ENCODE measurements at regions of chr19 and their contacts with region 1.

Region 1: DNA sequence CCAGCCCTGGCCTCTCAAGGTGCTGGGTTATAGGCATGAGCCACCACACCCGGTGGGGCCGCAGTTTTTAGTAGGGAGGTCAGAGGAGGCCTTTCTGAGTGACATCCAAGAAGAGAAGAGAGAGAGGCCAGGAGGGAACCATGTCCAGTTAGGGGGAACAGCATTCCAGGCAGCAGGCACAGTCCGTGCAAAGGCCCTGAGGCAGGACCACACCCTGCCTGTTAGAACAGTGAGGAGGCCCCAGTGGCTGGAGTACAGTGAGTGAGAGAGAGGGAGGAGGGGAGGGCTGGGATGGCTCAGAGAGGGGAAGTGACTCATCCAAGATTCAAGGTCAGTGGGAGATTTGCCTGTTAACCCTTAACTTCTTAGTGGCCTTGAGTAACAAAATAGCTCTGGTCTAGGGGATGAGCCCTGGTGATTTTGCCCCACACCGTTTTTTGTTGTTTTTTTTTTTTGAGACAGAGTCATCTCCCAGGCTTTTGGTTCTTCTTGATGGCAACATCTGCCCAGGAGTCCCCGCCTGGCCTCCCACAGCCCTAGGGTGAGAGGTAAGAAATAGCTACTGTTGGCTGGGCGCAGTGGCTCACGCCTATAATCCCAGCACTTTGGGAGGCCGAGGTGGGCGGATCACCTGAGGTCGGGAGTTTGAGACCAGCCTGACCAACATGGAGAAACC is 2.7 kb upstream of the PLIN3 start:
- DNase-seq: peak; percentile 98
- ATAC-seq: peak; percentile 81
- H3K4me3 ChIP-seq: peak overlapping the region; percentile 19 to 34 (median 24); a peak in 2 of 6 replicates
- H3K27ac ChIP-seq: peak overlapping the region; percentile 70
- H3K4me1 ChIP-seq: peaks cover 54% of the 10 kb centered on the region
- H3K27me3 ChIP-seq: no peaks in the 10 kb centered on the region; a peak in 1 of 5 replicates
- CTCF ChIP-seq: no peak
- EP300 ChIP-seq: peak; percentile 60 to 80; a peak in 3 of 4 replicates
- POLR2A ChIP-seq: no peak
- RAD21 ChIP-seq: peak; percentile 37

Region 2: GRCh38 chr19:4889034-4889815 is 19.1 kb after region 1 on chr19:
- CTCF ChIA-PET with region 1: no interaction called
- POLR2A ChIA-PET with region 1: no interaction called
- in situ Hi-C with region 1: no loop called
- intact Hi-C with region 1: loop called (anchors 1 kb)
- DNase-seq: no peak
- ATAC-seq: no peak
- H3K4me3 ChIP-seq: no peak overlapping the region
- H3K27ac ChIP-seq: no peak overlapping the region
- H3K4me1 ChIP-seq: peaks cover 16% of the 10 kb centered on the region
- H3K27me3 ChIP-seq: peaks cover 3 to 20% of the 10 kb centered on the region in 2 experiments; a peak in 2 of 5 replicates
- CTCF ChIP-seq: no peak
- EP300 ChIP-seq: no peak
- POLR2A ChIP-seq: no peak
- RAD21 ChIP-seq: no peak

Region 3: DNA sequence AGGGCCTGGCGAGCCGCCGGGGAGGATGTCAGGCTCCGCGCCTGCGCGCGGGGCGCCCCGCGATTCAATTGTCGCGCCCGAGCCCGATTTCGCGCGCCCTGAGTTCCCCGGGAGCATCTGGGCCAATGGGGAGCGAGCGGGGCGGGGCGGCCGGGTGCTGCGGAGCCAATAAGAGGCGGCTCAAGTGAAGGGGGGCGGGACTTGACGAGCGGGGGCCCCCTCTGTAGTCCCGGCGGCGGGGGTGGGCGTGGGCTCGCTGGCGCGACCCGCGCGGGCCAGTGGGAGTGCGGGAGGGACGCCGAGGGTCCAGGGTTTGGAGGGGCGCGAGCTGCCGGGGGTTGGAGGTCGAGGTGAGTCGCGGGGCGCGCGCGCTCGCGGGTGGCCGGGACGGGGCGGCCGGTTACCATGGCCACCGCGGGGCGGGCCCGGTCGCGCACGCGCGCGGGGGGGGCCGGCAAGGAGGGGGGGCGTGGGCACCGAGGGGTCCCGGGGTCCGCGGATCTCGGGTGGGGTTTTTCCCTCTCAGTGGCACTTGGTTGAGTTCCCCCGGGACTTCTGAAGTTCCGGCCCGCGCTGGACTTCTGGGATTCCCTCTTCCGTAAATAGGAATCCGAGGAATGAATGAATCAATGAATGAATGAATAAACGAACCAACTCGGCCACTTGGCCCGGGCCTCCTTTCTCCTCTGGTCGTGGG is 39.9 kb after region 1 on chr19:
- CTCF ChIA-PET with region 1: interaction called, 37 read pairs
- POLR2A ChIA-PET with region 1: interaction called, 9 read pairs
- in situ Hi-C with region 1: loop called (anchors 5 kb)
- intact Hi-C with region 1: loop called (anchors 1 kb)
- DNase-seq: peak; percentile 81
- ATAC-seq: peak; percentile 74
- H3K4me3 ChIP-seq: peak overlapping the region; percentile 70 to 79 (median 79)
- H3K27ac ChIP-seq: peak overlapping the region; percentile 88
- H3K4me1 ChIP-seq: peaks cover 71% of the 10 kb centered on the region
- H3K27me3 ChIP-seq: no peaks in the 10 kb centered on the region
- CTCF ChIP-seq: no peak
- EP300 ChIP-seq: no peak
- POLR2A ChIP-seq: no peak
- RAD21 ChIP-seq: no peak

Region 4: DNA sequence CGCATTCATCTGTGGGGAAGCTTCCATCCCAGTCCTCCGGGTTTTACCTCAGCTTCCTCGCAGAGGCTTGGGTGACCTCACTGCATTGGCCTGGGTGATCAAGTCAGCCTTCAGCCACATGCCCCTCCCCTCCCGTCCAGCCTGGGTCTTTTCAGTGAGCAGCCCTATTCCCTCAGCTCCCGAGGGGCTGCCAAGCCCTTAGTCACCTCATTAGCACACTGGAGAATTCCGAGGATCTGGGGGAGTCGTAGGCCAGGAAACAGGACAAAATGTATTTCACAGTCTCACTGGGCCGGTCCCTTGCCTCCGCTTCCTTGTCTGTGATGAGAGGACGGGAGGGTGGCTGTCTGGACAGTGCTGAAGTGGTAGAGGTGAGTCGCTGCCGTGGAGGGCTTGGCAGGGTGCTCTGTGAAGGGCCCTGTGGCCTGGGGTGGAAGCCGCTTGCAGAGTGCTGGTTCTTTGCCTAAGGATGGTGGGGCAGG is 118.6 kb after region 1 on chr19:
- CTCF ChIA-PET with region 1: no interaction called
- POLR2A ChIA-PET with region 1: no interaction called
- in situ Hi-C with region 1: no loop called
- intact Hi-C with region 1: no loop called
- DNase-seq: no peak
- ATAC-seq: no peak
- H3K4me3 ChIP-seq: no peak overlapping the region
- H3K27ac ChIP-seq: no peak overlapping the region
- H3K4me1 ChIP-seq: peaks cover 16% of the 10 kb centered on the region
- H3K27me3 ChIP-seq: no peaks in the 10 kb centered on the region
- CTCF ChIP-seq: no peak
- EP300 ChIP-seq: no peak
- POLR2A ChIP-seq: no peak
- RAD21 ChIP-seq: no peak